ENCODE measurements at regions of chr17 and their contacts with region 1.

Region 1: GRCh38 chr17:35088881-35089585 is 25.5 kb upstream of the RFFL start:
- DNase-seq: peak; percentile 68 to 98 (median 88)
- ATAC-seq: peak; percentile 96
- H3K4me3 ChIP-seq: peak overlapping the region; percentile 91 to 95
- H3K27ac ChIP-seq: peak overlapping the region; percentile 90 to 94
- H3K4me1 ChIP-seq: peaks cover 0 to 45% of the 10 kb centered on the region in 2 donors
- H3K27me3 ChIP-seq: no peaks in the 10 kb centered on the region
- CTCF ChIP-seq: peak; percentile 89 to 90

Region 2: DNA sequence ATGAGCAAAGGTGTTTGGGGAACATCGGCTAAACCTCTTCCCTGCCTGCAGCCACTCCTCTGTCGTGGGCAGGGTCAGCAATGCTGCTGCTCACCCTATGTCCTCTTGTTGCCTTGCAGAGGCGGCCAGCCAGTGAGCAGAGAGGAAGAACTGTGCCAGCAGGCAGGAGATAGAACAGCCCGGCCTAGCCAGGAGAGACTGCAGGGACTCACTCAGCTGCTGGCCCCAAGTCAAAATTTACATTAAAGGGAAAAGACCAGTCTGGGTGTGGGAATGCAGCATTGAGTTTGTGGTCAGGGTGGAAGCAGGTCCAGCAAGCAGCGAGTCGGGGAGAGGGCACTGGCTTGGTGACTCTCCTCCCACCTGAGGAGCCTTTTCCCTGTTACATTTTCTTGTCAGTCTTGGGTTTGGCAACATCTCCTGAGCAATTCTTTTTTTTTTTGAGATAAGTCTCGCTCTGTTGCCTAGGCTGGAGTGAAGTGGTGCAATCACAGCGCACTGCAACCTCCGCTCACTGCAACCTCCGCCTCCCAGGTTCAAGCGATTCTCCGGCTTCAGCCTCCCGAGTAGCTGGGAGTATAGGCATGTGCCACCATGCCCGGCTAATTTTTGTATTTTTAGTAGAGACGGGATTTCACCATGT is 86.0 kb before region 1 on chr17:
- intact Hi-C with region 1: loop called in 1 of 2 experiments (anchors 10 kb)
- DNase-seq: no peak
- ATAC-seq: no peak
- H3K4me3 ChIP-seq: no peak overlapping the region
- H3K27ac ChIP-seq: peak overlapping the region in 1 of 2 donors; percentile 6
- H3K4me1 ChIP-seq: peaks cover 0 to 7% of the 10 kb centered on the region in 2 donors
- H3K27me3 ChIP-seq: no peaks in the 10 kb centered on the region
- CTCF ChIP-seq: no peak

Region 3: GRCh38 chr17:35170968-35171771 is 82.1 kb after region 1 on chr17:
- intact Hi-C with region 1: no loop called
- DNase-seq: peak in 3 of 4 donors; percentile 24 to 30 (median 27)
- ATAC-seq: peak; percentile 57
- H3K4me3 ChIP-seq: no peak overlapping the region
- H3K27ac ChIP-seq: no peak overlapping the region
- H3K4me1 ChIP-seq: no peaks in the 10 kb centered on the region
- H3K27me3 ChIP-seq: no peaks in the 10 kb centered on the region
- CTCF ChIP-seq: no peak

Measured in left lung (tissue), 14 donors.